Spleen (tissue), 13 donors: ENCODE measurements at regions of chr4 and their contacts with region 1.

Region 1: GRCh38 chr4:154982187-154983047 is 201.3 kb downstream of the RBM46 start:
- DNase-seq: no peak
- H3K4me3 ChIP-seq: no peak overlapping the region
- H3K27ac ChIP-seq: no peak overlapping the region
- H3K4me1 ChIP-seq: no peaks in the 10 kb centered on the region
- H3K27me3 ChIP-seq: no peaks in the 10 kb centered on the region
- CTCF ChIP-seq: peak in 9 of 11 experiments; percentile 25 to 65 (median 53)
- POLR2A ChIP-seq: no peak

Region 2: GRCh38 chr4:155042014-155042413 is 59.6 kb after region 1 on chr4:
- intact Hi-C with region 1: no loop called
- DNase-seq: no peak
- H3K4me3 ChIP-seq: no peak overlapping the region
- H3K27ac ChIP-seq: no peak overlapping the region
- H3K4me1 ChIP-seq: no peaks in the 10 kb centered on the region
- H3K27me3 ChIP-seq: no peaks in the 10 kb centered on the region
- CTCF ChIP-seq: no peak
- POLR2A ChIP-seq: no peak

Region 3: DNA sequence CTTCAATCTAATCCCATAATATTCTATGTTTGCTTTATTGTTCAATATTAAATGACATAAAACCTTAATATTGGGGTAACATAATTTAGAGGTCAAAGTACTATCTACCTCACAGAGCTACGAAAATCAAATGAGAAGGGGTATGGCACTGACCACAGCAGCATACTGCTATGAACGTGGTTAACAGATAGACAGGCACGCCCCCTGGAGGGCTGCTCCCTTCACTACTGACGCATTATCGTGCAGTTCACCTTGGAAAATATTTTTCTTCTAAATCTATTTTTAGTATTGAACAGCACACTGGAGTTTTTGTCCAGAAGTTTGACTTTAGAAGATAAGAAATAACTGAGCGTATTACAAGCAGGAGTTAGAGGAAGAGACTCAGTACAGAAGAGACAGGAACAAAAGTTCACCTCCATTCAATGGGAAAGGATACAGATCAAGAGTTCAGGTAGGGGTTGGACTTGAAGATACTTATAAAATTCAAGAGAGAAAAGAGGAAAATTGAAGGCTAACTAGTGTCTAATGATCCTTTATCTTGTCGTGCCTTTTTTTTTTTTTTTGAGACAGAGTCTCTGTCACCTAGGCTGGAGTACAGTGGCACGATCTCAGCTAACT is 371.6 kb after region 1 on chr4:
- intact Hi-C with region 1: loop called (anchors 5 kb)
- DNase-seq: peak; percentile 75
- H3K4me3 ChIP-seq: no peak overlapping the region
- H3K27ac ChIP-seq: no peak overlapping the region
- H3K4me1 ChIP-seq: no peaks in the 10 kb centered on the region
- H3K27me3 ChIP-seq: no peaks in the 10 kb centered on the region
- CTCF ChIP-seq: peak in 10 of 11 experiments; percentile 24 to 68 (median 56)
- POLR2A ChIP-seq: no peak